Left ventricle myocardium superior (tissue), 1 donor: ENCODE measurements at regions of chr9 and their contacts with region 1.

Region 1: DNA sequence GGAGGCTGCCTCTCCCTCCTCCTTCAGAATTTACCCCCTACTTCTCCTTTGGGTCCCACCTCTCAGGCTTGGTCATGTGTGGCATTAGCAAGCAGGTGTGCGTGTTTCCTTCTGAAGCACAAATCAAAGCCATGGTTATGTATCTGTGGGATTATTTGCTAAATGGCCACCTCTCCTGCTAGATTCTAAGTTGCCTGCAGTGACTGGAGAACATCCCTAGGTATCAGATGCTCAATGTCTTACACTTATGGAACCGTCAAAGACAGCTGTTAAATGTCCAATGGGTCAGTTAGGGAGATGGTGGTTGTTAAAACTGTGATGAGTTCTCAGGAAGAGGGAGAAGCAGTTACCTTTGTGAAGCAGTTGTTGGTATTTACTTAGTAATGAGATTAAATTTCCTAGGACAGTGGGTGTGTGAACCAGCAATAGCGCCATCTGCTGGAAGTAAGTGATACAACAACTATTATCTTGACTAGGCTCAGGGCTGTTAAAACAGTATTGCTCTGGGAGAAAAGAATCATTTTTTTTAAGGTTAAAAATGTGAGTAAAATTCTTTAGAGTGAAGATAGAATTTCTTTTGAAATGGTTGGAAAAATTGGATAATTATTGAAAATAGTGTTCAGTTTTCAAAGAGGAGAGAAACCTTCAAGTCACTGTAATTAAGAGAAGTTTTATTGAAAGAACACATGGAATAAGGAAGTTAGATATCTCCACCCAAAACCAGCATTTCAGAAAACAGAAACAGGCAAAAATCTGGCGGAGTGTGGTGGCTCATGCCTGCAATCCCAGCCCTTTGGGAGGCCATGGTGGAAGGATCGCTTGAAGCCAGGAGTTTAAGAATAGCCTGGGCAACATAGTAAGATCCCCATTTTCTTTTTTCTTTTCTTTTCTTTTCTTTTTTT is 71.3 kb downstream of the TMC1 start:
- DNase-seq: no peak
- ATAC-seq: peak; percentile 81

Region 2: DNA sequence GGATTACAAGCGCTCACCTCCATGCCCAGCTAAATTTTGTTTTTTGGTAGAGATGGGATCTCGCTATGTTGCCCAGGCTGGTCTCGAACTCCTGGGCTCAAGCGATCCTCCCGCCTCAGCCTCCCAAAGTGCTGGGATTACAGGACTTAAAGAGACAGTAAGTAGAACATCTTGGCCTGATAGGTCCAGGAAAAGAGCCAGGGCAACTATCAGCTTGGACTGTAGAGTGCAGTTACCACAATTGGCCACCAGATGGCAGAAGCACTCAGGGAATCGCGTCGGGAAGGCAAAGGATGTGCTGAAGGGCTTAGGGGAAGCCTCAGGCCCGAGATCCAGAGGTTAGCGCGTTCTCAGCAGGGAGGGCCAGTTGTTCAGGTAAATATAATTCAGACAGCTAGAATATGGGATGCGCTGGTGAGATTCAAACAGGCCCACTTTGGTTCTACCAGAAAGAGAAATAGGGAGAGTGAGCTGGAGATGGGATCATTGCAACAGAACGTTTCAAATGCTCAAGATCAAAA is 553.8 kb before region 1 on chr9:
- intact Hi-C with region 1: loop called (anchors 10 kb)
- DNase-seq: peak; percentile 68
- ATAC-seq: peak; percentile 85

Region 3: DNA sequence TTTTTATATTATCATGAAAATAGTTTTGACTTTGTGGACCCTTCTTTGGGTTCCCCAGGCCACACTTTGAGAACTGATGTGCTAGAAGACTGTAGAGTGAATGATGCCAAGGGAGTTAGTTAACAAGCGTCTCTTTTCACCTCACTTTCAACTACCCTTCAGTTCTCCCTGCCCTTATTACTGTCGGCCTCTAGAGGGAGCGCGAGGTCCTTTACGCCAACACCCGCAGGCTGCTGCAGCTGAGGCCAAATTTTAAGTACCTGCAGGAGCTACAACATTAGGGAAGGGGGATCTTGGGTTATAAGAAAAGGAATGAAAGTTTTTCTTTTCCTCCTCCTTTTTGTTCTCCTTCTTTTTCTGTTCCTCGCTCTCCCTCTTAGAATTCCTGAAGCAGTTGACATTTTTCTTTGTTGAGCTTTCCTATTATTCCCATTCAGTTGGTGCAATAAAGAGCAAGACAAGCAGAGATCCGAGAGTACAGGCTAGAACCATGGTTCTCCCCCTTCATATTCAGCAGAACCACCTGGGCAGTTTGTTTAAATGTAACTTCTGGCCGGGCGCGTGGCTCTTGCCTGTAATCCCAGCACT is 311.7 kb before region 1 on chr9:
- intact Hi-C with region 1: loop called (anchors 5 kb)
- DNase-seq: peak; percentile 71
- ATAC-seq: peak; percentile 87